ENCODE measurements at regions of chr20 and their contacts with region 1.

Region 1: DNA sequence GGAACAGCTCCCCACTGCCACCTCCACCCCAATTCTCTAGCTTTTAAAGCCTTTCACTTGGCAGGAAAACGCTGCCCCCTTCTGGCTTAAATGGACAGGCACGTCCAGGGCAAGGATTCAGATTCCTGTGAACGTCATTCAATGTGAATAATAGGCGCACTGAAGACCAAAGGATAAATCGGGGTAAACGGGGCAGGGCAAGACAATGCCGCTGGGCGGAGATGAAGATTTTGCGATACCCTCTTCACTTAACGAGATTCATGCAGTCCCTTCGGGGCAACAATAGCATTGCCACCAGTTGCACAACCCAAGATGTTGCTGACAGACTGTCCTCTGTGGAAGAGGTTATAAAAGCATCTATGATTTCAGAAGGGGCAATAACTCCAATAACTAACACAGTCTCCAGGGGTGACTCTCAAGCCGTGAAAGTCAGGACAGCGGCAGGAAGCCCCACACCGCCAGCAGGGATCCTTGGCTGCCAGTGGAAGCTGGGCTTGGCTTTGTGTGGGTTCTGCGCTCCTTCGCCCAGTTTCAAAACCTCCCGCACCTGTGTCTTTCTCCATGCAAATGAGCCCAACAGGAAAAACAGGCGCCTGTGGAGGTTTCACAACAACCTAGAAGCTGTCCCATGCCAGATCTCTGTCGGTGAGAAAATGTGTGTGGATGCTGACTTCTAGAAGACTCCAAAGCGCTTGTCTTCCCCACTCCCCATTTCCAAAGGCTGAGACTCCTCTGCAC is 291.8 kb downstream of the BMP7 start:
- DNase-seq: peak; percentile 79
- H3K4me3 ChIP-seq: no peak overlapping the region
- H3K27ac ChIP-seq: no peak overlapping the region
- H3K4me1 ChIP-seq: no peaks in the 10 kb centered on the region
- H3K27me3 ChIP-seq: peaks cover 7% of the 10 kb centered on the region; the same call in 1 of the 2 replicates

Region 2: DNA sequence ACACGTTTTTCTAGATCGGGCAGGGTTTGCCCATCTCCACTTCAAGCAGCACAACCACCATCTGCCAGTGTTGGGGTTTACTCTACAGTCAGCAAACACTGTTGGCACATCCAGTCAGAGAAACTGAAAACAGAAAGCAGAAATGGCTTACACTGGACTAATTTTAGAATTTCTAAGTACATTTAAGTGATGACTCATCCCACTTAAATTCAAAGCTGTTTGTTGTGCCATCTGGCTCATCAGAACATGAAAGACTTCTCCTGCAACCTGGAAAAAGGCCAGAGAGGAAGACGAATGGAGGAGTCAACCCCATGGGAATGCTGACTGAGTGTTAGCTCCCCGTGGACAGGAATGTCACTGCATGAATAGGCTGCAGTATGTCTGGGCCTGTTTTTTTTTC is 419.8 kb before region 1 on chr20:
- in situ Hi-C with region 1: loop called (anchors 10 kb)
- DNase-seq: peak; percentile 97
- H3K4me3 ChIP-seq: peak overlapping the region; percentile 56
- H3K27ac ChIP-seq: peak overlapping the region; percentile 54
- H3K4me1 ChIP-seq: peaks cover 11% of the 10 kb centered on the region
- H3K27me3 ChIP-seq: no peaks in the 10 kb centered on the region

Region 3: GRCh38 chr20:56629670-56630478 is 344.8 kb before region 1 on chr20:
- in situ Hi-C with region 1: loop called (anchors 10 kb)
- DNase-seq: peak; percentile 96
- H3K4me3 ChIP-seq: peak overlapping the region; percentile 96
- H3K27ac ChIP-seq: peak overlapping the region; percentile 41
- H3K4me1 ChIP-seq: peaks cover 14% of the 10 kb centered on the region
- H3K27me3 ChIP-seq: no peaks in the 10 kb centered on the region; the same call in 1 of the 2 replicates

Region 4: GRCh38 chr20:57080788-57081187 is 106.1 kb after region 1 on chr20:
- in situ Hi-C with region 1: no loop called
- DNase-seq: peak; percentile 71
- H3K4me3 ChIP-seq: no peak overlapping the region
- H3K27ac ChIP-seq: no peak overlapping the region
- H3K4me1 ChIP-seq: peaks cover 15% of the 10 kb centered on the region
- H3K27me3 ChIP-seq: no peaks in the 10 kb centered on the region

Region 5: GRCh38 chr20:57414867-57415592 is 440.4 kb after region 1 on chr20:
- in situ Hi-C with region 1: no loop called
- DNase-seq: peak; percentile 50
- H3K4me3 ChIP-seq: no peak overlapping the region
- H3K27ac ChIP-seq: no peak overlapping the region
- H3K4me1 ChIP-seq: no peaks in the 10 kb centered on the region
- H3K27me3 ChIP-seq: peaks cover 9% of the 10 kb centered on the region; the same call in 1 of the 2 replicates